PC-9 (cell line): ENCODE measurements at regions of chr12 and their contacts with region 1.

Region 1: DNA sequence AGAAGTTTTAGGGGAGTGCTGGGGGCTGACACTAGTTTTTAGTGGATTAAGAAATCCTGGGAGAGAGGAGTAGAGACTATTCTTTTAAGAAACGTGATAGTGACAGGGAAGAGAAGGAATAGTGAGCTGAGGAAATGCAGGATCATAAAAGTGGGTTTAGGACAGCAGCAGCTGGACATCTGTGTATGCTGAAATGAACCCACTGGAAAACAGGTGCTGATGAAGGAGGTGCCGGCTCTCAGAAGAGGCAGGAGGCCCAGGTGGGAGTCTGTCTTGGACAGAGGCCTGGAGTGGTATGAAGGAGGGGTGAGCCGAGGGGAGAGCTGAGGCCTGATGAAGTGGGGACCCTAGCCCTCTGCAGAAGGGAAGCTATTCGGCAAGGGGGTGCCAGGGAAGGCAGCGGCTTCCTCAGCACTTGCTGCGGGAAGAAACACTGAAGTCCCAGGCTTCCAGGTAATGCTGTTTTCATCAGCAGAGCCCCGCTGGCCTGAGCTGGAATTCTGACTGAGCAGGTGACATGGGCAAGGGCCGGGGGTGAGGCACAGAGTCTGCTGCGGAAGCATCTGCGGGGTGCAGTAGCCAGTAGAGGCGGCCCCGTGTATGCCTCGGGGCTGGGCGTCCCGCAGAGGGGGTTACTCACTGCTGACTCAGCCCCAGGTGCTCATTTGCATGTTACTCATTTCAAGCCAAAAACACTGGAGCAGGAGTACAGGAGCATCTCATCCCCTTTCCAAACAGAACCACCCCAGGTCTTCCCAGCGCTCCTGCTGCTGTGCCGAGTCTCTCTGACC is 89.7 kb downstream of the TMCC3 start:
- DNase-seq: peak; percentile 94
- H3K4me3 ChIP-seq: peak overlapping the region; percentile 59
- H3K27ac ChIP-seq: peak overlapping the region; percentile 91
- H3K4me1 ChIP-seq: peaks cover 65% of the 10 kb centered on the region
- H3K27me3 ChIP-seq: no peaks in the 10 kb centered on the region
- CTCF ChIP-seq: no peak

Region 2: GRCh38 chr12:94571556-94571955 is 10.9 kb after region 1 on chr12:
- CTCF ChIA-PET with region 1: interaction called, 4 read pairs
- POLR2A ChIA-PET with region 1: interaction called, 5 read pairs
- intact Hi-C with region 1: loop called (anchors 1 kb)
- DNase-seq: peak; percentile 74 to 77
- H3K4me3 ChIP-seq: no peak overlapping the region
- H3K27ac ChIP-seq: peak overlapping the region; percentile 72
- H3K4me1 ChIP-seq: peaks cover 36% of the 10 kb centered on the region
- H3K27me3 ChIP-seq: no peaks in the 10 kb centered on the region
- CTCF ChIP-seq: no peak

Region 3: GRCh38 chr12:94586589-94587259 is 26.1 kb after region 1 on chr12:
- CTCF ChIA-PET with region 1: no interaction called
- POLR2A ChIA-PET with region 1: interaction called, 14 read pairs
- intact Hi-C with region 1: no loop called
- DNase-seq: peak in 1 of 2 experiments; percentile 52
- H3K4me3 ChIP-seq: no peak overlapping the region
- H3K27ac ChIP-seq: peak overlapping the region; percentile 10; the same call in 1 of the 2 replicates
- H3K4me1 ChIP-seq: peaks cover 35% of the 10 kb centered on the region
- H3K27me3 ChIP-seq: no peaks in the 10 kb centered on the region
- CTCF ChIP-seq: no peak

Region 4: DNA sequence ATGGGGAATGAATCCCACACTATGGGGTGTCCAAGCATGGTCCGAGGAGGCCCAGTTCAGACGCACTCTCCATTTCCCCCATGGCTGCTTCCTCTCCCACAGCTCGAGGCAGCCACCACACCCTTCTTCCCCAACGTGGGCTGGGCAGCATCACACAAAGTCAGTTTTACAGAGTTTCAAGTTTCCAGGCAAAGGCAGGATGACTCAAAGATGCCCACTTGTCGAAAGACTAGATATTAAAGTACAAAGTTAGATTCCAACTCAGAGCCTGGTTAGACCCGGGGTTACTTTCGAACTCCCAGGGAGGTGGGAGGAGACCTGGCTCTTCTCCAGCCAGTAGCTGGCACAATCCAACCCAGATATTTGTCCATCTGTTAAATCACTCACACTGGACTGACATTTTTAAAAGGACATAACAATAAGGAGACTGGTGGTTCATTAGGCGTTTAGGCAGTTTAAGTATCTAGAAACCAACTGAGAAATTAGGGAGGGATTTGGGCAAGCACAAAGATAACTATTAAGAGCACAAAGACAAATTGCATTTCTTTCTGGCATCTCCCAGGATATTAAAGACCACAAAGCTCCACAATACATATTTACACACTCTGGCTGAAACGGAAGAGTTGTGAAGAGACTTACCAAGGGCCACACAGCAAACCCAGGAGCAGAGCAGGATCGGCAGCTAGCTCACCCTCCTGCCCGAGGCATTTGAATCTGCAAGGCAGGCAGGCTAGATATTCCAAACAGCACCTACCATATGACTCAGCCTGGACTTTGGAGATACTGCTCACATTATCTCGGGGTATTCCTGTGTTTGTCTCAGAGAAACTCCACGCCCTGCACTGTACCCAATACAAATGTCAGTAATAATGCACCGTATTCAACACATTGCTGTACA is 54.9 kb after region 1 on chr12:
- CTCF ChIA-PET with region 1: no interaction called
- POLR2A ChIA-PET with region 1: interaction called, 17 read pairs
- intact Hi-C with region 1: loop called (anchors 2 kb)
- DNase-seq: peak; percentile 69 to 86
- H3K4me3 ChIP-seq: peak overlapping the region; percentile 48
- H3K27ac ChIP-seq: peak overlapping the region; percentile 91
- H3K4me1 ChIP-seq: peaks cover 68% of the 10 kb centered on the region
- H3K27me3 ChIP-seq: no peaks in the 10 kb centered on the region
- CTCF ChIP-seq: no peak

Region 5: GRCh38 chr12:94644141-94644979 is 83.7 kb after region 1 on chr12:
- CTCF ChIA-PET with region 1: no interaction called
- POLR2A ChIA-PET with region 1: interaction called, 5 read pairs
- intact Hi-C with region 1: loop called (anchors 2 kb)
- DNase-seq: peak; percentile 57 to 94
- H3K4me3 ChIP-seq: peak overlapping the region; percentile 45; the same call in 1 of the 2 replicates
- H3K27ac ChIP-seq: peak overlapping the region; percentile 94
- H3K4me1 ChIP-seq: peaks cover 67% of the 10 kb centered on the region
- H3K27me3 ChIP-seq: no peaks in the 10 kb centered on the region
- CTCF ChIP-seq: no peak

Region 6: GRCh38 chr12:94660436-94660835 is 99.8 kb after region 1 on chr12:
- CTCF ChIA-PET with region 1: no interaction called
- POLR2A ChIA-PET with region 1: interaction called, 12 read pairs
- intact Hi-C with region 1: no loop called
- DNase-seq: no peak
- H3K4me3 ChIP-seq: no peak overlapping the region
- H3K27ac ChIP-seq: no peak overlapping the region
- H3K4me1 ChIP-seq: peaks cover 10% of the 10 kb centered on the region
- H3K27me3 ChIP-seq: no peaks in the 10 kb centered on the region
- CTCF ChIP-seq: no peak

Region 7: GRCh38 chr12:94762259-94762942 is 201.8 kb after region 1 on chr12:
- CTCF ChIA-PET with region 1: interaction called, 5 read pairs
- POLR2A ChIA-PET with region 1: interaction called, 15 read pairs
- intact Hi-C with region 1: no loop called
- DNase-seq: peak in 1 of 2 experiments; percentile 72
- H3K4me3 ChIP-seq: no peak overlapping the region
- H3K27ac ChIP-seq: peak overlapping the region; percentile 67
- H3K4me1 ChIP-seq: peaks cover 30% of the 10 kb centered on the region
- H3K27me3 ChIP-seq: no peaks in the 10 kb centered on the region
- CTCF ChIP-seq: no peak

Region 8: DNA sequence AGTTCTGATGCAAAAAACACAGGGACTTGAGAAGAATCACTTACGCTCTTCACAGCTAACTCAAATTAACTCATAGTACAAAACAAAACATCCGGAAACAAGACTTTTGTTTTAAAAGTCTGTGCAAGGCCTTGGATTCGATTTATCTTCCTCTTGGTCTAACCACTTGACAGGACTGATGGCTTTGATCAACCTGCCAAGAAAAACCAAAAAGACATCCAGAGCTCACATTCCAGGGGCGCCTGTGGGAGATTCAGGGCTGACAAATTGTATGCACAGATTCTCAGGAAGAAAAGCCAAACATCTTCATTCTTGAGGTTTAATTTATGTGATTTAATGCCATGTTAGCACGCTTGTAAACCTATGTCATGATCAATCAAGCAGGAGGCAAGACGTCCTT is 218.9 kb after region 1 on chr12:
- CTCF ChIA-PET with region 1: no interaction called
- POLR2A ChIA-PET with region 1: no interaction called
- intact Hi-C with region 1: no loop called
- DNase-seq: no peak
- H3K4me3 ChIP-seq: no peak overlapping the region
- H3K27ac ChIP-seq: no peak overlapping the region
- H3K4me1 ChIP-seq: no peaks in the 10 kb centered on the region
- H3K27me3 ChIP-seq: no peaks in the 10 kb centered on the region
- CTCF ChIP-seq: no peak